SK-N-SH (cell line): ENCODE measurements at regions of chr1 and their contacts with region 1.

Region 1: DNA sequence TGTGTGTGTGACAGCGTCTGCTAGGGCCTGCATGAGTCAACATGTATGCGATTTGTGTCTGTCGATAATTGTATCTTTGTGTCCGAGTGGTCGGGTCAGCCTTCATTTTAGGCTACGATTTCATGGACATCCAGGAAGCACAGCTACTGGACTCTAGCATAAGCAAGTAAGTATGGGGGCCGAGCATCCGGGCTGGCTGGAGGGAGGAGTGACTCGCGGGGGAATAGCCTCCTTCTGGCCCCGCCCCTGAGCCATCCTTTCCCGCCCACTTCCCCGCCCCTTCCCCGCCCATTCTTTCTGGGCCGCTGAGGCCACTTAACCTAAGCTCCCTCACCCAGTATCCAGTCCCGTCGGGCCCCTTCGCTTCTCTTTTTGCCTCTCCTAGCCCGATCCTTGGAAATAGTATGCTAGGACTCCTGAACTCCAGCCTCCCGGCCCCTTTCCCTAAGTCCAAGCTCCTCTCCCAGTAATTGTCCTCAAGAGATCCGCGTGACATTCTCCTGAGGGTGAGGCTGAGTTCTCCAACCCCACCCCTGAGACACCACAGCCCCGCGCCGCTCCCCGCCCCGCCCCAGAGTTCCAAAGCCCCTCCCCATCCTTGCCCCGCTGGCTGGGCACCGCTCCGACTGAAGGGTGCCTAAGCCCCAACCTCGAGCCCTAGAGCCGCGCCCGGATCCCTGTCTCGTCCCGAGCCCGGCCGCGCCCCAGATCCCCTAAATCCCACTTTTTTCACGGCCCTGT is 1.2 kb downstream of the MAP3K6 start:
- DNase-seq: peak; percentile 97
- H3K4me3 ChIP-seq: peak overlapping the region; percentile 69 to 89
- H3K27ac ChIP-seq: peak overlapping the region; percentile 84 to 94
- H3K4me1 ChIP-seq: peaks cover 4 to 14% of the 10 kb centered on the region in 2 experiments; a peak in 2 of 4 replicates
- H3K27me3 ChIP-seq: no peaks in the 10 kb centered on the region
- CTCF ChIP-seq: no peak
- EP300 ChIP-seq: peak in 1 of 2 experiments; percentile 66; a peak in 3 of 4 replicates
- RAD21 ChIP-seq: no peak

Region 2: DNA sequence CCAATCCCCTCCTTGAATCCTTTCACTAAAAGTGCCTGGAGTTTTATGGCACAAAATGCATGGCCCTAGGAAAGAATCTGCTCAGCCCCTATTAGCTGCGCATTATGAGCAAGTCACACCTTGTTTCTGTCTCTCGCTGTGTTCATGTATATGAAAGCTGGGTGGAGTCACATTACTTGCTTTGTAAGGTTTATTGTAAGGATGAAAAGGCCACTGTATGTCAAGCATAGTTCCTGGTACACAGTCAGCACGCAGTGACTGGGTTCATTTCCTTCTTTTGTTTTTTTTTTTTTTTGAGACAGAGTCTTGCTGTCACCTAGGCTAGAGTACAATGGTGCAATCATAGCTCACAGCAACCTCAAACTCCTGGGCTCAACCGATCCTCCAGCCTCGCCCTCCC is 203.9 kb before region 1 on chr1:
- CTCF ChIA-PET with region 1: no interaction called
- POLR2A ChIA-PET with region 1: no interaction called
- DNase-seq: peak; percentile 1
- H3K4me3 ChIP-seq: no peak overlapping the region
- H3K27ac ChIP-seq: no peak overlapping the region
- H3K4me1 ChIP-seq: 0 out of 4 replicates have a peak, but pooled peaks cover 0 to under 1% of the 10 kb centered on the region in 2 experiments
- H3K27me3 ChIP-seq: no peaks in the 10 kb centered on the region
- CTCF ChIP-seq: no peak
- EP300 ChIP-seq: no peak
- RAD21 ChIP-seq: no peak

Region 3: GRCh38 chr1:27349784-27350662 is 15.5 kb before region 1 on chr1:
- CTCF ChIA-PET with region 1: interaction called, 77 read pairs
- POLR2A ChIA-PET with region 1: interaction called, 15 read pairs
- DNase-seq: peak; percentile 94
- H3K4me3 ChIP-seq: peak overlapping the region in 1 of 2 experiments; percentile 39; a peak in 2 of 4 replicates
- H3K27ac ChIP-seq: no peak overlapping the region
- H3K4me1 ChIP-seq: peaks cover 0 to 10% of the 10 kb centered on the region in 2 experiments; a peak in 1 of 4 replicates
- H3K27me3 ChIP-seq: no peaks in the 10 kb centered on the region
- CTCF ChIP-seq: no peak
- EP300 ChIP-seq: no peak
- RAD21 ChIP-seq: no peak